ENCODE measurements at regions of chr6 and their contacts with region 1.

Region 1: DNA sequence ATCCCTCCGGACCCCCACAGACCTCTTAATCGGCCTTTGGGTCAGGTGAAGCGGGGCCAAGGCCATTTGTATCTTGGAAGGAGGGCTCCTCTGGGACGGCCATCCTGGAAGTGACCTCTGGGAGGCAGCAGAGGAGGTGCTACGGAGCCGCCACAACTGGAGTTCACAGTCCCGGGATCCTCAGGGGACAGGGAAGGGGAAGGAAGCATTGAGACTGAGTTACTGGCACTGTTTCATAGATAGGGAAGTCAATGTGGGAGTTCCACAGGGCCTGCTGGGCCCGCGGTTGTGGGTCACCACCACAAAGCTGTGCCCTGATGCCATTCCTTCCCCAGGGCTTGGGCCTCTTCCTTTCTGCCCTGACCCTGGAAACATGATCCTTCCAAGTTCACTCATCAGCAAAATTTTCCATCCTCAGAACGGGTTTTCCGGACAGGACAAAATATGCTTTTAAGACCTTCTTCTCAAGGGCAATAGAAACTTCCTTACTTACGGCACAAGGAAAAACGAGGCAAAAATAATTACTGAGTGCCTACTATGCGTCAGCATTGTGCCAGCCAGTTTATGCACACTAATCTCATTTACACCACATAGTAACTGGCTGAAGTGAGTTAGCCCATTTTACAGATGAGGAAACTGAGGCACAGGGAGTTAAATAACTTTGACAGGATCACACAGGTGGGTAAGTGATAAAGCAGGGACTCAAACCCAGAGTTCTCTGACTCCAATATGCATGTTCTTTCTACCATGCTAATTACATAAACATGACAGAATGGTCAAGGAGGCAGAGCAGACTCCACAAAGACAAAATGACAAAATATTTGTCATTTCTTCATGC is 143.8 kb downstream of the UNC5CL start:
- DNase-seq: peak; percentile 65
- ATAC-seq: peak; percentile 84

Region 2: GRCh38 chr6:40611912-40612311 is 283.3 kb before region 1 on chr6:
- intact Hi-C with region 1: no loop called
- DNase-seq: no peak
- ATAC-seq: peak; percentile 25

Region 3: DNA sequence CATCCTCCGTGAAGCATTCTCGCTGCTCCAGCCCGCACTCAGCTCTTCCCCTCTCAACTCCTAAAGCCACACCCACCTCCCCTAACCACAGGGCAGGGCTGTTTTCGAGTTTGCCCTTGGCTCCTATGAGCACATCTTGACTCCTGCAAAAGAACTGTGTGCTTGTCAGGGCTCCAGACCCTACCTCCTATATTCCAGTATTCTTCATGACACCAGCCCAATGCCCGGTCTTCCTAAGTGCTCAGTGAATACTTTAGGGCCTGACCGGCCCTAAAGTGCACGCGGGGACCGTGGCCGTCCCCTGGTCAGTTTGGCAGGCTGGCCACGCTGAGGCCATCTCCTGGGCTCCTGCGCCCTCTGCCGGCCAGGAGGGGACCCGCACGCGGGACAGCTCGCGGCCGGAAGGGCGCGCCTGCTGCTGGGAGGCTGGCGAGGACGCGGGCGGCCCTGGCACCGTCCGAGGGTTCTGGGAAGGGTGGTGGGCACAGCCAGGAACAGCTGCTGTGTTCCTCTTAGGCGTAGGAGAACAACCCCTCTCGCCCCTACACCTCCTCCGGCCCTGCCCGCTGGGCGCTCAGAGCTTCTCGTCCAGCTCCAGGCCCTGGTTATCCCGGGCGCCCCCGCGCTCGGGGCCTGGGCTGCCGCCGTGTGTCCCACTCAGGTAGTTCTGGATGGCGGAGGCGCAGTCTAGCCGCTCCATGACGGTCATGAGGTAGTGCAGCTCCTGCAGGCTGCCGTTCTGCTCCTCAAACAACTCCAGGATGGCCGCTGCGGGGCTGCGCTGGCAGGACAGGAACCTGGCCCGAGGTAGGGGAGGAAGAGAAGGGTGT is 132.8 kb after region 1 on chr6:
- intact Hi-C with region 1: loop called (anchors 10 kb)
- DNase-seq: peak; percentile 95
- ATAC-seq: peak; percentile 97

Measured in left ventricle myocardium superior (tissue), 1 donor.